ENCODE measurements at regions of chr10 and their contacts with region 1.

Region 1: DNA sequence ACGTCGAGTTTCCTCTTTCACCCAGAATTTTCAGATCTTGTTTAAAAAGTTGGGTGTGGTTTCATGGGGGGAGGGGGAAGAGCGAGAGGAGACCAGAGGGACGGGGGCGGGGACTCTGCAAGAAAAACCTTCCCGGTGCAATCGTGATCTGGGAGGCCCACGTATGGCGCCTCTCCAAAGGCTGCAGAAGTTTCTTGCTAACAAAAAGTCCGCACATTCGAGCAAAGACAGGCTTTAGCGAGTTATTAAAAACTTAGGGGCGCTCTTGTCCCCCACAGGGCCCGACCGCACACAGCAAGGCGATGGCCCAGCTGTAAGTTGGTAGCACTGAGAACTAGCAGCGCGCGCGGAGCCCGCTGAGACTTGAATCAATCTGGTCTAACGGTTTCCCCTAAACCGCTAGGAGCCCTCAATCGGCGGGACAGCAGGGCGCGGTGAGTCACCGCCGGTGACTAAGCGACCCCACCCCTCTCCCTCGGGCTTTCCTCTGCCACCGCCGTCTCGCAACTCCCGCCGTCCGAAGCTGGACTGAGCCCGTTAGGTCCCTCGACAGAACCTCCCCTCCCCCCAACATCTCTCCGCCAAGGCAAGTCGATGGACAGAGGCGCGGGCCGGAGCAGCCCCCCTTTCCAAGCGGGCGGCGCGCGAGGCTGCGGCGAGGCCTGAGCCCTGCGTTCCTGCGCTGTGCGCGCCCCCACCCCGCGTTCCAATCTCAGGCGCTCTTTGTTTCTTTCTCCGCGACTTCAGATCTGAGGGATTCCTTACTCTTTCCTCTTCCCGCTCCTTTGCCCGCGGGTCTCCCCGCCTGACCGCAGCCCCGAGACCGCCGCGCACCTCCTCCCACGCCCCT is at the start of gene VIM:
- DNase-seq: no peak
- ATAC-seq: peak; percentile 75
- H3K4me3 ChIP-seq: peak within 1 kb of the TSS; percentile 64 to 88
- H3K27ac ChIP-seq: peak within 1 kb of the TSS; percentile 96
- H3K4me1 ChIP-seq: peaks cover 26% of the 10 kb centered on the region
- H3K27me3 ChIP-seq: no peaks in the 10 kb centered on the region
- CTCF ChIP-seq: no peak
- total RNA-seq, gene VIM: 3,436 TPM

Region 2: DNA sequence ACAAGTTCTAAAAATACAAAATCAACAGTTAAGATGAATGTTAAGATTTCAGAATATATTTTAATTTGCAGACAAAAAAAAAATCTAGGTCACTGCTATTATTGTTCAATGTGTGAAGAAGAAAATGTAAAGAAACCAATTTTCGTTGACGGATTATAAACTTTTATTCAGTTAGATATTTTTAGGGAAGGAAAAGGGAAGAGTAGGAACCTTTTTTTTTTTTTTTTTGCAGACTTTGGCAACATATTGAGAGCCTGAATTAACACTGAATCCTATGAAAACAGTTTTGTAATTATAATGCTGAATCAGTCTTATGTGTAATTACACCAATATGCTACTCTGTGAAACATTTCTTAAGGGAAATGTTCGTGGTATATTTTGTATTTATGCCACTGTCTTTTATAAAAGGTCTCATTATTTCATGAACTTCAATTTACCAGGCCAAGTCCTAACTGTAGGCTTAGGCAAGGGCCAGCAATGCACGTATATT is 119.7 kb after region 1 on chr10:
- CTCF ChIA-PET with region 1: no interaction called
- POLR2A ChIA-PET with region 1: interaction called, 12 read pairs
- in situ Hi-C with region 1: no loop called
- intact Hi-C with region 1: no loop called
- DNase-seq: no peak
- ATAC-seq: no peak
- H3K4me3 ChIP-seq: peak overlapping the region; percentile 24 to 52
- H3K27ac ChIP-seq: peak overlapping the region; percentile 12; the same call in 1 of the 2 replicates
- H3K4me1 ChIP-seq: peaks cover 2% of the 10 kb centered on the region
- H3K27me3 ChIP-seq: no peaks in the 10 kb centered on the region
- CTCF ChIP-seq: no peak

Region 3: GRCh38 chr10:17365402-17365801 is 137.1 kb after region 1 on chr10:
- CTCF ChIA-PET with region 1: no interaction called
- POLR2A ChIA-PET with region 1: no interaction called
- in situ Hi-C with region 1: no loop called
- intact Hi-C with region 1: no loop called
- DNase-seq: no peak
- ATAC-seq: no peak
- H3K4me3 ChIP-seq: no peak overlapping the region
- H3K27ac ChIP-seq: no peak overlapping the region
- H3K4me1 ChIP-seq: no peaks in the 10 kb centered on the region
- H3K27me3 ChIP-seq: no peaks in the 10 kb centered on the region
- CTCF ChIP-seq: no peak